Mammary epithelial cell (primary cell): ENCODE measurements at regions of chr4 and their contacts with region 1.

Region 1: GRCh38 chr4:138308405-138308804 is 66.3 kb upstream of the SLC7A11 start:
- DNase-seq: peak; percentile 99
- H3K4me3 ChIP-seq: peak overlapping the region in 1 of 3 experiments; percentile 32
- H3K27ac ChIP-seq: peak overlapping the region; percentile 98
- H3K4me1 ChIP-seq: peaks cover 43% of the 10 kb centered on the region
- H3K27me3 ChIP-seq: no peaks in the 10 kb centered on the region
- CTCF ChIP-seq: no peak

Region 2: DNA sequence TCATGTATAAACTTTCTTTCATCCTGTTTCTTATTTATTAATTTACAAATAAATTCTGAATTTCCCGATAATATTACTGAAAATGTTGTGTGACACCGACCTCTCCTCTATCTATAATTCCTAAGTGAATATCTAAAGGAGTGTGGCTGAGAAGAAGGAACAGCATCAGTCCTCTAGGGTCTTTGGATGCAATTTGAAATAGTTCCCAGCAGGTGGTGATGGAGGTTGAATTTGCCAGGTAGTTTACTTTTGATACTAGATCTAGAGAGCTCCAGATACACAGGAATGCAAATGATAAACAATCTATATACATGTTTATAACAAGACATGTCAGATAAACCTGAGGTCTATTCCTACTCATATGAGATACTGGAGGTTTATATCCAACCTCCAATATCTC is 1081.5 kb before region 1 on chr4:
- CTCF ChIA-PET with region 1: no interaction called
- dilution Hi-C with region 1: no loop called
- in situ Hi-C with region 1: no loop called
- intact Hi-C with region 1: no loop called
- DNase-seq: peak; percentile 11
- H3K4me3 ChIP-seq: no peak overlapping the region
- H3K27ac ChIP-seq: no peak overlapping the region
- H3K4me1 ChIP-seq: no peaks in the 10 kb centered on the region
- H3K27me3 ChIP-seq: no peaks in the 10 kb centered on the region
- CTCF ChIP-seq: peak; percentile 44 to 62

Region 3: GRCh38 chr4:138259801-138260200 is 48.6 kb before region 1 on chr4:
- CTCF ChIA-PET with region 1: no interaction called
- dilution Hi-C with region 1: no loop called
- in situ Hi-C with region 1: no loop called
- intact Hi-C with region 1: loop called (anchors 1 kb)
- DNase-seq: peak; percentile 84
- H3K4me3 ChIP-seq: peak overlapping the region in 2 of 3 experiments; percentile 5 to 33
- H3K27ac ChIP-seq: peak overlapping the region; percentile 100
- H3K4me1 ChIP-seq: peaks cover 33% of the 10 kb centered on the region
- H3K27me3 ChIP-seq: no peaks in the 10 kb centered on the region
- CTCF ChIP-seq: no peak

Region 4: DNA sequence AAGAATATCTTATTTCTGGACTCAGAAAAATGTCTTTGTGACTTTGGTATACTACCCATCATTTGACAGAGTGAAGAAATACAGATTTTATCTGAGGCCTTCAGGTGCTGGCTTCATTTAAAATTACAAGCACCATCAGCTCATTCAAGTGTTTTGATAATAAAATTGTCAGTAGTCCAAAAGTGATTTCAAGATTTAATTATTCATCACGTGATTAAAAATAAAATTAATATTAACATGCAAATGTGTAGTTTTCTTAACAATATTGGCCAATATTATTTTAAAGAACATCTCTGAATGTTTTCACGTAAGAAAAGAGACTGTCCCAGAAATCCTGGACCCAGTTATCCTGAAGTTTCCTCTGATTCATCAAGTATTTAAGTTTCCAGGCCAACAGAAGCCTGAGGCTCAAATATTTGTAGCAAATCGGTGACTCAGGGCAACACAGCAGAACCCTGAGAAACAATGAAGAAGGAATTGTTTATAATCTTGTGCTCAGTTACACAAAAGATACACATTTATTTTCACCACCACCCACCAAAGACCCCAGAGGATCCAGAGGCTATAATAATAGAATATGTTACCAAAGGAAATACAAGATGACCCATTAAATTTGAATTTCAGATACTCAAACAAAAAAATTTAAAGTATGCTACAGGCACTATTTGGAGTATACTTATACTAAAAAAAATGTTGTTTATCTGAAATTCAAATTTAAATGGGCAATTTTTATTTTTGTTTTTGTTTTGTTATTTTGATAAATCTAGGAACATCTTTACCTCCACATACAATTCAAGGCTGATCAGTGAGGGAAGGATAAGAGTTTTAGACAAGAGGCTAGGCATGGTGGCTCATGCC is 32.4 kb before region 1 on chr4:
- CTCF ChIA-PET with region 1: no interaction called
- dilution Hi-C with region 1: no loop called
- in situ Hi-C with region 1: no loop called
- intact Hi-C with region 1: loop called (anchors 1 kb)
- DNase-seq: peak; percentile 81
- H3K4me3 ChIP-seq: no peak overlapping the region
- H3K27ac ChIP-seq: peak overlapping the region; percentile 98
- H3K4me1 ChIP-seq: peaks cover 14% of the 10 kb centered on the region
- H3K27me3 ChIP-seq: no peaks in the 10 kb centered on the region
- CTCF ChIP-seq: no peak

Region 5: GRCh38 chr4:138341739-138342415 is 33.5 kb after region 1 on chr4:
- CTCF ChIA-PET with region 1: no interaction called
- dilution Hi-C with region 1: no loop called
- in situ Hi-C with region 1: no loop called
- intact Hi-C with region 1: loop called (anchors 1 kb)
- DNase-seq: no peak
- H3K4me3 ChIP-seq: no peak overlapping the region
- H3K27ac ChIP-seq: no peak overlapping the region
- H3K4me1 ChIP-seq: peaks cover 8% of the 10 kb centered on the region
- H3K27me3 ChIP-seq: no peaks in the 10 kb centered on the region
- CTCF ChIP-seq: no peak

Region 6: GRCh38 chr4:138981930-138982390 is 673.6 kb after region 1 on chr4:
- CTCF ChIA-PET with region 1: no interaction called
- dilution Hi-C with region 1: no loop called
- in situ Hi-C with region 1: no loop called
- intact Hi-C with region 1: no loop called
- DNase-seq: peak; percentile 14
- H3K4me3 ChIP-seq: no peak overlapping the region
- H3K27ac ChIP-seq: no peak overlapping the region
- H3K4me1 ChIP-seq: no peaks in the 10 kb centered on the region
- H3K27me3 ChIP-seq: no peaks in the 10 kb centered on the region
- CTCF ChIP-seq: peak in 1 of 2 donors; percentile 34